ENCODE measurements at regions of chr2 and their contacts with region 1.

Region 1: GRCh38 chr2:202238234-202239197 is at the start of gene SUMO1:
- DNase-seq: peak; percentile 86
- ATAC-seq: peak; percentile 94
- H3K4me3 Mint-ChIP-seq: peak within 1 kb of the TSS; percentile 100
- H3K27ac Mint-ChIP-seq: peak within 1 kb of the TSS; percentile 93
- H3K4me1 Mint-ChIP-seq: peaks cover 36% of the 10 kb centered on the region
- H3K27me3 Mint-ChIP-seq: no peaks in the 10 kb centered on the region
- CTCF ChIP-seq: no peak
- total RNA-seq, gene SUMO1: 78.8 and 83.9 TPM in 2 replicates

Region 2: DNA sequence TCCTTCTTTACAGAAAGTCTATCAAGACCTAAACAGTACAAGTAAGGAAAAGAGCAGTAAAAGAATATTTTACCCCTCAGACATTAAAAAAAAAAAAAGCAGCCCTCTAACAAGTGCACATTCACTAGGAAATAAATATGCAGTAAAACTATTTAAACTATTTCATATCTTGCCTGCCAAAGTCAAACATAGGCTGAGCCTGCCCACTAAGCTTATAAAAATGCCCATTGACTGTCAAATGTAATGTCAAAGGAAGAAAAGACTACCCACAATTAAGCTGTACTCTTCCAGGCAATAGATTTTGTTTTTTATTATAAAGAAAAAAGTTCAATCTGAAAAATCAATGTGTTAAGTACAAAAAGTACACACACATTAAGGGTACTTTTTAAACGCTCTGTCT is 469.6 kb before region 1 on chr2:
- CTCF ChIA-PET with region 1: no interaction called
- POLR2A ChIA-PET with region 1: interaction called, 14 read pairs
- intact Hi-C with region 1: no loop called
- DNase-seq: no peak
- ATAC-seq: no peak
- H3K4me3 Mint-ChIP-seq: no peak overlapping the region
- H3K27ac Mint-ChIP-seq: no peak overlapping the region
- H3K4me1 Mint-ChIP-seq: no peaks in the 10 kb centered on the region
- H3K27me3 Mint-ChIP-seq: no peaks in the 10 kb centered on the region
- CTCF ChIP-seq: no peak

Region 3: GRCh38 chr2:202408546-202409140 is 170.1 kb after region 1 on chr2:
- CTCF ChIA-PET with region 1: no interaction called
- POLR2A ChIA-PET with region 1: no interaction called
- intact Hi-C with region 1: no loop called
- DNase-seq: no peak
- ATAC-seq: no peak
- H3K4me3 Mint-ChIP-seq: no peak overlapping the region
- H3K27ac Mint-ChIP-seq: no peak overlapping the region
- H3K4me1 Mint-ChIP-seq: no peaks in the 10 kb centered on the region
- H3K27me3 Mint-ChIP-seq: no peaks in the 10 kb centered on the region
- CTCF ChIP-seq: no peak

Region 4: GRCh38 chr2:203014456-203015199 is 776.1 kb after region 1 on chr2 and contains the start of gene NBEAL1:
- CTCF ChIA-PET with region 1: no interaction called
- POLR2A ChIA-PET with region 1: no interaction called
- intact Hi-C with region 1: loop called (anchors 1 kb)
- DNase-seq: peak; percentile 100
- ATAC-seq: peak; percentile 93
- H3K4me3 Mint-ChIP-seq: peak within 1 kb of the TSS; percentile 87
- H3K27ac Mint-ChIP-seq: peak within 1 kb of the TSS; percentile 84
- H3K4me1 Mint-ChIP-seq: peaks cover 26% of the 10 kb centered on the region
- H3K27me3 Mint-ChIP-seq: no peaks in the 10 kb centered on the region
- CTCF ChIP-seq: no peak
- total RNA-seq, gene NBEAL1: 8.9 and 9.3 TPM in 2 replicates

Measured in activated B cell treated with CpG ODN at 0.5 μM for 24 hours (primary cell).